K562 (cell line): ENCODE measurements at regions of chr14 and their contacts with region 1.

Region 1: GRCh38 chr14:93332853-93333630 is at the start of gene BTBD7:
- DNase-seq: peak; percentile 88 to 94 (median 90)
- ATAC-seq: peak; percentile 92
- H3K4me3 ChIP-seq: peak within 1 kb of the TSS; percentile 86
- H3K27ac ChIP-seq: peak within 1 kb of the TSS; percentile 88
- H3K4me1 ChIP-seq: peaks cover 3 to 8% of the 10 kb centered on the region in 2 experiments; a peak in 4 of 5 replicates
- H3K27me3 ChIP-seq: no peaks in the 10 kb centered on the region
- CTCF ChIP-seq: peak in 2 of 3 experiments; percentile 2 to 11; a peak in 1 of 6 replicates
- EP300 ChIP-seq: no peak
- POLR2A ChIP-seq: peak; percentile 65
- RAD21 ChIP-seq: no peak
- polyA plus RNA-seq, gene BTBD7: 2.5 to 4.5 TPM

Region 2: DNA sequence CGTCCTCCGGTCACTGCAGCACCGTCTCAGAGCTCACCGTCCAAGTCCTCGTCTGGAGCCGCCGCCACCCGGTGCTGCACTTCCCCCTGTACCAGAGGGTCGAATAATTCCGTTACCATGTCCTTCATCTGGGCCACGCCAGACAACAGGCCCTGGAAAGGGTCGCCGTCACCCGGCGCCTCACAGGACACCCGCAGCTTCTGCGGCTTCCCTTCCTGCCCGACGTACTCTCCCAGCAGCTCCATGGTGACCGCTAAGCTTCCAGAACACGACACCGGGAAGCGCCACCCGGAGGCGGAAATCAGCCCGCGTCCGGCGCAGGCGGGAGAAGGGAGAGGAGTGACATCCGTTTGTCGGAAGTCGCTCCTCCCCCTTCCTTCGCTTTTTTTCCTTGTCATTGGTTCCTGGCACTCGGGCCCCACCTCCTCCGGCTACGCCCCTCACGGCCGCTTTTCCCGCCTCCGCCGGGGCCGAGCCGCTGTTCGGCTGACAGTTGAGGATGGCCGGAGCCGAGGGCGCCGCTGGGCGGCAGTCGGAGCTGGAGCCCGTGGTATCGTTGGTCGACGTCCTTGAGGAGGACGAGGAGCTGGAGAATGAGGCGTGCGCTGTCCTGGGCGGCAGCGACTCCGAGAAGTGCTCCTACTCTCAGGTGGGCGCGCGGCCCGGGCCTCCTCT is 126.1 kb before region 1 on chr14 and contains the starts of genes GON7 and UBR7:
- CTCF ChIA-PET with region 1: no interaction called
- POLR2A ChIA-PET with region 1: no interaction called
- in situ Hi-C with region 1: no loop called
- intact Hi-C with region 1: loop called (anchors 1 kb)
- DNase-seq: peak; percentile 84 to 96 (median 87)
- ATAC-seq: peak; percentile 92
- H3K4me3 ChIP-seq: peak within 1 kb of the TSS; percentile 87
- H3K27ac ChIP-seq: peak within 1 kb of the TSS; percentile 86
- H3K4me1 ChIP-seq: peaks cover 7 to 12% of the 10 kb centered on the region in 2 experiments; a peak in 3 of 5 replicates
- H3K27me3 ChIP-seq: no peaks in the 10 kb centered on the region
- CTCF ChIP-seq: peak in 2 of 3 experiments; percentile 14 to 17; a peak in 2 of 6 replicates
- EP300 ChIP-seq: no peak
- POLR2A ChIP-seq: peak; percentile 85
- RAD21 ChIP-seq: no peak
- polyA plus RNA-seq, gene GON7: 23.9 to 26.9 TPM
- polyA plus RNA-seq, gene UBR7: 12.5 to 20.0 TPM

Region 3: GRCh38 chr14:93269341-93270068 is 63.5 kb before region 1 on chr14:
- CTCF ChIA-PET with region 1: no interaction called
- POLR2A ChIA-PET with region 1: no interaction called
- in situ Hi-C with region 1: no loop called
- intact Hi-C with region 1: loop called (anchors 5 kb)
- DNase-seq: peak in 3 of 4 experiments; percentile 9 to 57 (median 16)
- ATAC-seq: peak; percentile 75
- H3K4me3 ChIP-seq: no peak overlapping the region
- H3K27ac ChIP-seq: peak overlapping the region; percentile 53
- H3K4me1 ChIP-seq: peaks cover 3 to 27% of the 10 kb centered on the region in 2 experiments; a peak in 4 of 5 replicates
- H3K27me3 ChIP-seq: no peaks in the 10 kb centered on the region
- CTCF ChIP-seq: no peak
- EP300 ChIP-seq: no peak
- POLR2A ChIP-seq: no peak
- RAD21 ChIP-seq: no peak

Region 4: GRCh38 chr14:93281937-93282336 is 51.1 kb before region 1 on chr14:
- CTCF ChIA-PET with region 1: no interaction called
- POLR2A ChIA-PET with region 1: interaction called, 3 read pairs
- in situ Hi-C with region 1: no loop called
- intact Hi-C with region 1: loop called (anchors 5 kb)
- DNase-seq: no peak
- ATAC-seq: no peak
- H3K4me3 ChIP-seq: no peak overlapping the region
- H3K27ac ChIP-seq: no peak overlapping the region
- H3K4me1 ChIP-seq: no peaks in the 10 kb centered on the region; a peak in 2 of 5 replicates
- H3K27me3 ChIP-seq: no peaks in the 10 kb centered on the region
- CTCF ChIP-seq: no peak
- EP300 ChIP-seq: no peak
- POLR2A ChIP-seq: no peak
- RAD21 ChIP-seq: no peak

Region 5: GRCh38 chr14:93317875-93318807 is 14.9 kb before region 1 on chr14:
- CTCF ChIA-PET with region 1: interaction called, 3 read pairs
- POLR2A ChIA-PET with region 1: interaction called, 12 read pairs
- in situ Hi-C with region 1: no loop called
- intact Hi-C with region 1: no loop called
- DNase-seq: peak in 1 of 4 experiments; percentile 37
- ATAC-seq: peak; percentile 70
- H3K4me3 ChIP-seq: no peak overlapping the region
- H3K27ac ChIP-seq: peak overlapping the region; percentile 71
- H3K4me1 ChIP-seq: peaks cover 4 to 37% of the 10 kb centered on the region in 2 experiments; a peak in 4 of 5 replicates
- H3K27me3 ChIP-seq: no peaks in the 10 kb centered on the region
- CTCF ChIP-seq: no peak
- EP300 ChIP-seq: no peak
- POLR2A ChIP-seq: no peak
- RAD21 ChIP-seq: no peak